PC-3 (cell line): ENCODE measurements at regions of chr2 and their contacts with region 1.

Region 1: GRCh38 chr2:168136392-168136977 is 110.9 kb downstream of the STK39 start:
- DNase-seq: peak; percentile 80
- ATAC-seq: no peak
- H3K4me3 ChIP-seq: no peak overlapping the region
- H3K27ac ChIP-seq: no peak overlapping the region
- H3K4me1 ChIP-seq: peaks cover 17% of the 10 kb centered on the region
- H3K27me3 ChIP-seq: no peaks in the 10 kb centered on the region
- CTCF ChIP-seq: peak; percentile 74

Region 2: GRCh38 chr2:168156661-168157060 is 20.2 kb after region 1 on chr2:
- CTCF ChIA-PET with region 1: no interaction called
- POLR2A ChIA-PET with region 1: no interaction called
- intact Hi-C with region 1: loop called (anchors 2 kb)
- DNase-seq: peak; percentile 80
- ATAC-seq: peak; percentile 73
- H3K4me3 ChIP-seq: no peak overlapping the region
- H3K27ac ChIP-seq: peak overlapping the region; percentile 92
- H3K4me1 ChIP-seq: peaks cover 29% of the 10 kb centered on the region
- H3K27me3 ChIP-seq: no peaks in the 10 kb centered on the region
- CTCF ChIP-seq: no peak

Region 3: DNA sequence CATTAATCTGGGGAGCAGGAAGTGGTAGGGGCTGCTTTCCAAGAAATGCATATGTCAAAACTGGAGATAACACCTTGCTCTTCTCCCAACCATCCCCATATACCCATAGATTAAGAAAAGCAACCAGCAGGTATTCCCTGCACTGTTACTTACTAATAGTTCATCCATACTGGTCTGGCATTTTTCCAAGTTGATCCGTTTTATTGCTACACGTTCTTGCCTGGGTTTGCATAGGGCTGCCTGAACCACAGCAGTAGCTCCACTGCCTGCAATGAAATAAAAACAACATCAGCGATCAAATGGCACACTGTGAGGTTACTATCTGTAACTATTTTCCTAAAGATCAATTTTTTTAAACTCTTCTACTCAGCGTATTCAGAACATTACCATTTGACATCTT is 45.3 kb after region 1 on chr2:
- CTCF ChIA-PET with region 1: no interaction called
- POLR2A ChIA-PET with region 1: no interaction called
- intact Hi-C with region 1: no loop called
- DNase-seq: peak; percentile 52
- ATAC-seq: no peak
- H3K4me3 ChIP-seq: no peak overlapping the region
- H3K27ac ChIP-seq: no peak overlapping the region; the same call in 1 of the 2 replicates
- H3K4me1 ChIP-seq: peaks cover 54% of the 10 kb centered on the region
- H3K27me3 ChIP-seq: no peaks in the 10 kb centered on the region
- CTCF ChIP-seq: no peak

Region 4: DNA sequence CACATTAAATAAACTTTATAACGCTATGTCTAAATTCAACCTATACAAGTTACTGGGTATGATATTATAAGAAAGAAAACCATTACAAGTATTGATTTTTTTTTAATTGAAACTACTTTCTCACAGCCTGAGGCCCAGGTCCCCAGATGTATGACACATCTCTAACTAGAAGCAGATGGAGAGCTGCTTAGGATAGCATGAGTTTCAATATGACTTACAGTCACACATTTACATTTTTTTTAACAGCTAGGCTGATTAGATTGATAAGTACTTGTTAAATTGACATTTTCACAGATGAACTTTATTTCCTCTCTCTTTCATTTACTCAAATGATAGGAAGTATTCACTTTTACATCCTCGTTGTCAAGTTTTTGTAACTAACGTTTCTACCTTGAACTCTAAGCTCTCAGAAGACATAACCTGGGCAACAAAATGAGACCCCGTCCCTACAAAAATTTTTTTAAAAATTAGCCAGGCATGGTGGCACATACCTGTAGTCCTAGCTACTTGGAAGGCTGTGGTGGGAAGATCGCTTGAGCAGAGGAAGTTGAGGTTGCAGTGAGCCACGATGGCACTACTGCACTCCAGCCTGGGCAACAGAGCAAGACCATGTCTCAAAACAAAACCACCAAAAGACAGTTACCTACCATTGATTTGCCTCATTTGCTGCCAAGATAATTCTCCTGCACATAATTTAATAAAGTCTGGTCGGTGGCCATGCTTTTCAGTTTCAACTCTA is 58.5 kb after region 1 on chr2:
- CTCF ChIA-PET with region 1: interaction called, 3 read pairs
- POLR2A ChIA-PET with region 1: no interaction called
- intact Hi-C with region 1: loop called (anchors 5 kb)
- DNase-seq: no peak
- ATAC-seq: no peak
- H3K4me3 ChIP-seq: no peak overlapping the region
- H3K27ac ChIP-seq: no peak overlapping the region
- H3K4me1 ChIP-seq: peaks cover 50% of the 10 kb centered on the region
- H3K27me3 ChIP-seq: no peaks in the 10 kb centered on the region
- CTCF ChIP-seq: no peak

Region 5: DNA sequence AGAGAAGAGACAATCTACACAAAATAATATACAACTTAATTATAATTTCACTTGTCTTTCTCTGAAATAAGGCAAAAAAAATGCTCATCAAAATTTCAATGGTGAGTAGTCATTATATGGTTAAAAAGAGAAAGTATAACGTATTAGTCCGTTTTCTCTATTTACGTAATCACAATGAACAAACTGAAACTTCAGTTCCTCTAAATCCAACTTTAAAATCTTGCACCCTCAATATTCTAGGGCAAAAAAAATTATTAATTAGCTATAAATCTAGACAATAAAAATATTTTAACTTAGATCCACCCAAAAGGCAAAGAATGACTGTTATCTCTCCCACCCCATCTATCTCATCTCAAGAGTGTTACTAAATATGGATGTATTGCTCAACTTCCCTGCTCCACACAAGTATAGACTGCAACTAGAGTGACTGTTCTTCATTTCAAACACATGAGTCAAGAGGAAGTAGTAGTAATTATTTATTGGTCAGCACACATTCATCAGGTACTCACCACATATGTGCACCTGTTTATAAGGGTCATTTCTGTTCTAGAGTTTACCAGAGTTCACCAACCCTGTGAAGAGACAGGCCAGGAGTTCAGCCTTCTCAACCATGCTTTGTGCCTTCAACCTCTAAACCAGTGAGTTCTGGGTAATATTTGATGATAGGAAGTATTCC is 74.5 kb after region 1 on chr2:
- CTCF ChIA-PET with region 1: interaction called, 7 read pairs
- POLR2A ChIA-PET with region 1: no interaction called
- intact Hi-C with region 1: loop called (anchors 2 kb)
- DNase-seq: peak; percentile 95
- ATAC-seq: peak; percentile 88
- H3K4me3 ChIP-seq: peak overlapping the region; percentile 39
- H3K27ac ChIP-seq: peak overlapping the region; percentile 97
- H3K4me1 ChIP-seq: peaks cover 43% of the 10 kb centered on the region
- H3K27me3 ChIP-seq: no peaks in the 10 kb centered on the region
- CTCF ChIP-seq: no peak

Region 6: DNA sequence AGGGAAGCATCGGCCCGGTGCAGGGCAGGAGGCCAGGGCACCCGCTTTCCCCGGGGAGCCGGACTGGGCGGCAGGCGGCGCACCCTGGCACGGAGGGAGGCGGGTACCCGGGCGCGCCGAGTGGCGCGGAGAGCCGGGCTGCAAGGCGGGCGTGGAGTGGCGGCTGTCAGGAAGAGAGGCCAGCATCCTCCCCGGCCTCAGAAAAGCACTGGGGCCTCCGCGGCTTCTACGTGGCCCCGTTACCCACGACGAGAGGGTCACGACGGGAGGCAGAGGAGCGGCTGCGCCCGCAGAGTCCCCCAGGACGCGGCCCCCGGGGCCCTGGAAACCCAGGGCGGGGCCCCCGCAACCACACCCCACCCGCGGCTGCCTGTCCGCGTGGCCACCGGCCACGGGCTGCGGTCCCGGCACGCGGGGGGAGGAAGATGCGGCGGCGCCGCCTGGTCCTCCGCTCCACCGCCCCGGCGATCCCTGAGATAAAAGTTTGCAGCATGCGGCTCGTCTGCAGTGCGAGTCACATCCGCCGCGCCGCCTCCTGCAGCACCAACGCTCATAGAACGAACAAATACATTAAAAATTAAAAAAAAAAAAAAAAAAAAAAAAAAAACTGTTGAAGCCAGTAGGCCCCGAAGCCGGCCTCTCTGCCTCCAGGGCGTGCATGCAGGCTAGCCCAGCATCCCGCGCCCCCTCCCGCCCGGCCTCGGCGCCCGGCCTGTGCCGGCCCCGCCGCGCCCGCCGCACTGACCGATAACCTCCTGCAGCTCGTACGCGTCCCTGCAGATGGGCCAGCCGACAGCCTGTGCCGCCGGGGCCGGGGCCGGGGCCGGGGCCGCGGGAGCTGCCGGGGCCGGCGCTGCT is 110.2 kb after region 1 on chr2:
- CTCF ChIA-PET with region 1: no interaction called
- POLR2A ChIA-PET with region 1: no interaction called
- intact Hi-C with region 1: loop called (anchors 5 kb)
- DNase-seq: peak; percentile 54
- ATAC-seq: peak; percentile 49
- H3K4me3 ChIP-seq: peak overlapping the region; percentile 98
- H3K27ac ChIP-seq: peak overlapping the region; percentile 53
- H3K4me1 ChIP-seq: peaks cover 36% of the 10 kb centered on the region
- H3K27me3 ChIP-seq: no peaks in the 10 kb centered on the region
- CTCF ChIP-seq: peak; percentile 46

Region 7: DNA sequence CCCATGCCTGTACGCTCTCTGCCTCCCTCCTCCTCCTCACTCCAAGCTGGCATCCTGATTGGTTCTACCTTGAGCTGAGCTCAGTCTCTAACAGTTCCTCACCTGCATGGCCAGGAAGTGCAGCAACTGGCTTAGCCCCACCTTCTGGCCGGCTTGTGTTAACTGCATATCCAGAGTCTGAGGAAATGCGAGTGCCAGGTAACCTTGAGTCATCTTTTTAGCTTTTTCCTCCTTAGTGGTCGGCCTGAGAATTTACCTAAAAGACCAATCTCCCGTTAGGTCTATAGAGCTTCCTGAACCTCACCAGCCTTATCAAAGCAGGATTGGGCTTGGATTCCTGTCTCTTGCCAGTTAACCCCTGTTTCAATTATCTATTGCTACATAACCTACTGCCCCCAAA is 200.4 kb after region 1 on chr2:
- CTCF ChIA-PET with region 1: interaction called, 3 read pairs
- POLR2A ChIA-PET with region 1: no interaction called
- intact Hi-C with region 1: loop called (anchors 2 kb)
- DNase-seq: peak; percentile 92
- ATAC-seq: peak; percentile 96
- H3K4me3 ChIP-seq: no peak overlapping the region
- H3K27ac ChIP-seq: no peak overlapping the region
- H3K4me1 ChIP-seq: peaks cover 4% of the 10 kb centered on the region
- H3K27me3 ChIP-seq: no peaks in the 10 kb centered on the region
- CTCF ChIP-seq: peak; percentile 89